Dendritic cell treated with granulocyte-macrophage colony-stimulating factor and Interleukin-4, amounts not matched to agents 40 ng/mL and 50 ng/mL, for 4 days (primary cell): ENCODE measurements at regions of chrX and their contacts with region 1.

Region 1: GRCh38 chrX:41441934-41442823 is 5.0 kb upstream of the NYX start:
- H3K4me3 Mint-ChIP-seq: peak overlapping the region; percentile 77
- H3K27ac Mint-ChIP-seq: peak overlapping the region; percentile 99
- H3K4me1 Mint-ChIP-seq: peaks cover 15% of the 10 kb centered on the region
- H3K27me3 Mint-ChIP-seq: no peaks in the 10 kb centered on the region

Region 2: GRCh38 chrX:41127477-41128192 is 314.5 kb before region 1 on chrX:
- intact Hi-C with region 1: no loop called
- H3K4me3 Mint-ChIP-seq: no peak overlapping the region
- H3K27ac Mint-ChIP-seq: no peak overlapping the region
- H3K4me1 Mint-ChIP-seq: peaks cover 16% of the 10 kb centered on the region
- H3K27me3 Mint-ChIP-seq: no peaks in the 10 kb centered on the region

Region 3: GRCh38 chrX:41333744-41334259 is 108.4 kb before region 1 on chrX and contains the start of gene DDX3X:
- intact Hi-C with region 1: loop called (anchors 5 kb)
- H3K4me3 Mint-ChIP-seq: peak within 1 kb of the TSS; percentile 89
- H3K27ac Mint-ChIP-seq: peak within 1 kb of the TSS; percentile 99
- H3K4me1 Mint-ChIP-seq: no peaks in the 10 kb centered on the region
- H3K27me3 Mint-ChIP-seq: no peaks in the 10 kb centered on the region

Region 4: DNA sequence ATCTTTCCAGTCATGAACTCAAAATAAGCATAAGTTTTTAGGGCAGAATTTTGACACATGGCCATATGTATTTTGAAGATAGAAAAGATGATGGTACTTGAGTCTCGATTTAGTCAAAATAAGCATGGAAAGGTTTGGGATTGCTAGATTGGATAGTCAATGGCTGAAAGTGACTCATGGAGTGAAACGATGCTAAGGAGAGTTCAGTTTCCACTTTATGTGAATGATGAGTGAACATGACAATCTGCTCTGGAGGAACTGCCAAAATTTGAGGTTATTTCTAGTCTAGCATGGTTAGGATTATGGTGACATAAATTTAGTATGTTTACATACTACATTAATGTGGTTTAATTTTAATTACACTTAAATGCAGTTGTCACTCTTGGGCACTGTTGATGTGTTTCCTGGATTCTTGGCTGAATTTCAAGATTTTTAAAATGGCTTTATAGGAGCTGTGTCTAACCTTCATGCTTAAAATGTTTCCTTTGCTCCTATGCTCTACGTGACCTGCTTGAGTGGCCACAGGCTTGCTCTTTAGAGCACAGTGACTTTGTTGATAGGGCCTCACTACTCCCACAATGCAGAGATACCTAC is 91.1 kb before region 1 on chrX:
- intact Hi-C with region 1: loop called (anchors 5 kb)
- H3K4me3 Mint-ChIP-seq: no peak overlapping the region
- H3K27ac Mint-ChIP-seq: no peak overlapping the region
- H3K4me1 Mint-ChIP-seq: peaks cover 12% of the 10 kb centered on the region
- H3K27me3 Mint-ChIP-seq: no peaks in the 10 kb centered on the region

Region 5: GRCh38 chrX:41384041-41384705 is 58.0 kb before region 1 on chrX:
- intact Hi-C with region 1: loop called (anchors 2 kb)
- H3K4me3 Mint-ChIP-seq: no peak overlapping the region
- H3K27ac Mint-ChIP-seq: peak overlapping the region; percentile 89
- H3K4me1 Mint-ChIP-seq: peaks cover 26% of the 10 kb centered on the region
- H3K27me3 Mint-ChIP-seq: no peaks in the 10 kb centered on the region